PC-9 (cell line): ENCODE measurements at regions of chr19 and their contacts with region 1.

Region 1: DNA sequence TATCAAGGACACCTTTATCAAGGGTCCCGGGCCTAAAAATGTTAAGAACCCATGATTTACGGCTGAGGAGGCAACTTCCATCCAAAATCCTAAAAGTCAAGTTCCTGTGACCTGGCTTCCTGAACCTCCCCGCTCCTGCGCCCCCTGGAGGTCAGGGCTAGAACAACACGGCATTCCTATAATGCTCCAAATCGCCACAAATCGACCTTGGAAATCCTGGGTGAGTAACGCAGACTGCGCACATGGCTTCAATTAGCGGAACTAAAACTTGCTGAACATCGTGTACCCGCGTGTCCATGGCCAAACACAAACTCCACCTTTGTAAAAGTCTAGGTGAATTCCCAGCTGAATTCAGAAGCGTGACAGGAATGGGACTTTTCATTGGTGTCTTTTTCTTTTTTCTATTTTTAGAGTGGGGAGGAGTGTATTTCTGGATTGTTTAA is 4.3 kb upstream of the C5AR1 start:
- DNase-seq: peak; percentile 64 to 65
- H3K4me3 ChIP-seq: peak overlapping the region; percentile 7; the same call in 1 of the 2 replicates
- H3K27ac ChIP-seq: no peak overlapping the region
- H3K4me1 ChIP-seq: peaks cover 15% of the 10 kb centered on the region
- H3K27me3 ChIP-seq: no peaks in the 10 kb centered on the region
- CTCF ChIP-seq: peak; percentile 99

Region 2: GRCh38 chr19:47210689-47211316 is 94.5 kb before region 1 on chr19:
- CTCF ChIA-PET with region 1: no interaction called
- POLR2A ChIA-PET with region 1: no interaction called
- intact Hi-C with region 1: no loop called
- DNase-seq: peak; percentile 67 to 70
- H3K4me3 ChIP-seq: no peak overlapping the region
- H3K27ac ChIP-seq: peak overlapping the region; percentile 70
- H3K4me1 ChIP-seq: peaks cover 15% of the 10 kb centered on the region
- H3K27me3 ChIP-seq: no peaks in the 10 kb centered on the region
- CTCF ChIP-seq: peak; percentile 95

Region 3: GRCh38 chr19:47428177-47428894 is 123.0 kb after region 1 on chr19:
- CTCF ChIA-PET with region 1: interaction called, 12 read pairs
- POLR2A ChIA-PET with region 1: no interaction called
- intact Hi-C with region 1: no loop called
- DNase-seq: peak; percentile 88 to 92
- H3K4me3 ChIP-seq: peak overlapping the region; percentile 33; the same call in 1 of the 2 replicates
- H3K27ac ChIP-seq: 0 out of 2 replicates have a peak overlapping the region, but pooled peaks have one; percentile 19
- H3K4me1 ChIP-seq: peaks cover 22% of the 10 kb centered on the region
- H3K27me3 ChIP-seq: peaks cover 18% of the 10 kb centered on the region
- CTCF ChIP-seq: no peak

Region 4: DNA sequence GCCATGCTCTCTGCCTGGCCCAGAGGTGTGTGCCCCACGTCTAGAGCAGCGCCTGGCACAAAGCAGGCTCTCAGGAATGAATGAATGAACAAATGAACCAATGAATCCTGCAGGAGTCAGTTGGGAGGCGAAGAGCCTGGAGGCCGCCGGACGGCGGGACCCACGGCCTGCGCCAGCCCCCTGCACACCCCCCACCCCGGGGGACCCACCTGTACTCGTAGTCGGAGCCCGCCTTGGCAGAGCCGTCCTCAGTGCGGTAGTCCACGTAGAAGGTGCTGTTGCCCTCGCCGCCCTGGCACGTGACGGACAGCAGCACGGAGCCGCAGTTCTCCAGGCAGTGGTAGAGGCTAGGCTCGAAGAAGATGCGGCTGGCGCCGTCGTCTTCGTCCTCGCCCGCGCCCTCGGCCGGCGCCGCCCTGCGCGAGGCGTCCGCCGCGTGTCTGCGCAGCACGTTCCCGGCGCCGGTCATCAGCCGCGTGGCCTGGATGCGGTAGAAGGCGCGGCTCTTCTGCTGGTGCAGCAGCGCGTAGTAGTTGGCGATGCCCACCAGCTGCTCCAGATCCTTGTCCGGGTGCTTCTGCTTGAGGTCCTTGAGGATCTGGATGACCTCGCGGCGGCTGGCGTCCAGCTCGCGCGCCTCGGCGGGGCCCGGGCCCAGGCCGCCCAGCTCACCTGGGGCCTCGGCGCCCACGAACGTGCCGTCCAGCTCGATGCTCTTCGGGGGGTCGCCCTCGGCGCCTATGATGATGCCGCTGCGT is 151.6 kb after region 1 on chr19:
- CTCF ChIA-PET with region 1: no interaction called
- POLR2A ChIA-PET with region 1: no interaction called
- intact Hi-C with region 1: no loop called
- DNase-seq: no peak
- H3K4me3 ChIP-seq: no peak overlapping the region
- H3K27ac ChIP-seq: no peak overlapping the region
- H3K4me1 ChIP-seq: no peaks in the 10 kb centered on the region
- H3K27me3 ChIP-seq: peaks cover 81% of the 10 kb centered on the region
- CTCF ChIP-seq: no peak